ENCODE measurements at regions of chr22 and their contacts with region 1.

Region 1: DNA sequence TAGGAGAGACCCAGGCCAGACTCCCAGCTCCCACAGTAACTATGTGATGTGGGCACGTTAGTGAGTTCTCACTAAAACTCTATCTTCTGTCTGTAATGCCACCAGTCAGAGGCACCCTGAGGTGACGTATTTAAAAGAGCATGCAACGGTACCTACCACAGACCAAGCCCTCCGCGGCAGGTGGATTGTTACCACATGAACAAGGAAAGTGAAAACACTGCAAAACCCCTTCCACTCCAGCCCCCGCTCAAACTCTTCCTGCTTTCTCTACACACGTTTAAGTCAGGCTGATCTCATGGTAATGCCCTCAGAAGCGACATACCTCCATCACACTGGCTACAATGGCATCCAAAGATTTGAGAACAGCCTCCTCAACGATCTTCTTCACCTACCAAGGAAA is 36.7 kb downstream of the SERPIND1 start:
- DNase-seq: no peak
- ATAC-seq: no peak
- H3K4me3 ChIP-seq: no peak overlapping the region
- H3K27ac ChIP-seq: no peak overlapping the region
- H3K4me1 ChIP-seq: no peaks in the 10 kb centered on the region
- H3K27me3 ChIP-seq: no peaks in the 10 kb centered on the region
- CTCF ChIP-seq: no peak

Region 2: GRCh38 chr22:20305931-20306645 is 504.6 kb before region 1 on chr22:
- intact Hi-C with region 1: no loop called
- DNase-seq: peak in 1 of 2 donors; percentile 2
- ATAC-seq: no peak
- H3K4me3 ChIP-seq: no peak overlapping the region
- H3K27ac ChIP-seq: no peak overlapping the region
- H3K4me1 ChIP-seq: no peaks in the 10 kb centered on the region
- H3K27me3 ChIP-seq: peaks cover 14 to 36% (median 18%) of the 10 kb centered on the region in 7 donors
- CTCF ChIP-seq: no peak

Region 3: GRCh38 chr22:20750461-20751184 is 60.0 kb before region 1 on chr22:
- intact Hi-C with region 1: loop called in 1 of 10 experiments (anchors 10 kb)
- DNase-seq: peak; percentile 56 to 66
- ATAC-seq: peak; percentile 76 to 90 (median 82)
- H3K4me3 ChIP-seq: no peak overlapping the region
- H3K27ac ChIP-seq: no peak overlapping the region
- H3K4me1 ChIP-seq: peaks cover 7 to 27% (median 12%) of the 10 kb centered on the region in 9 donors
- H3K27me3 ChIP-seq: no peaks in the 10 kb centered on the region
- CTCF ChIP-seq: no peak